ENCODE measurements at regions of chr5 and their contacts with region 1.

Region 1: GRCh38 chr5:141598391-141599350 is 20.1 kb downstream of the DIAPH1 start:
- H3K4me3 ChIP-seq: no peak overlapping the region
- H3K27ac ChIP-seq: no peak overlapping the region
- H3K4me1 ChIP-seq: no peaks in the 10 kb centered on the region
- CTCF ChIP-seq: no peak

Region 2: GRCh38 chr5:141149812-141150211 is 448.9 kb before region 1 on chr5 and contains the start of gene PCDHB6:
- CTCF ChIA-PET with region 1: no interaction called
- POLR2A ChIA-PET with region 1: no interaction called
- H3K4me3 ChIP-seq: no peak within 1 kb of the TSS
- H3K27ac ChIP-seq: no peak within 1 kb of the TSS
- H3K4me1 ChIP-seq: no peaks in the 10 kb centered on the region
- CTCF ChIP-seq: no peak

Region 3: GRCh38 chr5:141613344-141613743 is 14.7 kb after region 1 on chr5:
- CTCF ChIA-PET with region 1: interaction called, 122 read pairs
- POLR2A ChIA-PET with region 1: no interaction called
- H3K4me3 ChIP-seq: no peak overlapping the region
- H3K27ac ChIP-seq: no peak overlapping the region
- H3K4me1 ChIP-seq: peaks cover 30% of the 10 kb centered on the region
- CTCF ChIP-seq: no peak

Measured in HEK293 (cell line).